Endothelial cell of umbilical vein (primary cell): ENCODE measurements at regions of chr12 and their contacts with region 1.

Region 1: GRCh38 chr12:23014749-23015148 is 389.8 kb downstream of the ETNK1 start:
- DNase-seq: no peak
- H3K4me3 ChIP-seq: no peak overlapping the region
- H3K27ac ChIP-seq: no peak overlapping the region
- H3K4me1 ChIP-seq: no peaks in the 10 kb centered on the region
- H3K27me3 ChIP-seq: no peaks in the 10 kb centered on the region
- CTCF ChIP-seq: no peak
- POLR2A ChIP-seq: no peak

Region 2: DNA sequence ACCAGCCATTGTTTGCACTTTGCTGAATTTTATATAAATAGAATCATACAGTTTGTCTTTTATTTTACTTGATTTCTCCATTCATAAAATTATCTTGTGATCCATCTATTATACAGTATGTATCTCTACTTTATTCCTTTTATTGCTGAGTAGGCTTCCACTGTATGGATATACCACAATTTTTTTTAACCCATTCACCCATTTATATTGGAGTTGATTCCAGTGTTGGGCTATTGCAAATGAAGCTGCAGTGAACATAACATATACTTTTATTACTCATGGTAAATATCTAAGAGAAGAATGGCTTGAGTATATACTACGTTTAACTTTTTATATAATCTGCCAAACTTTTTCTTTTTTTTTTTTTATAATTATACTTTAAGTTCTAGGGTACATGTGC is 73.8 kb after region 1 on chr12:
- CTCF ChIA-PET with region 1: no interaction called
- POLR2A ChIA-PET with region 1: no interaction called
- dilution Hi-C with region 1: no loop called
- intact Hi-C with region 1: loop called (anchors 2 kb)
- DNase-seq: no peak
- H3K4me3 ChIP-seq: no peak overlapping the region
- H3K27ac ChIP-seq: no peak overlapping the region
- H3K4me1 ChIP-seq: peaks cover 18% of the 10 kb centered on the region
- H3K27me3 ChIP-seq: no peaks in the 10 kb centered on the region
- CTCF ChIP-seq: no peak
- POLR2A ChIP-seq: no peak